Activated T-helper 1 cell treated with anti-CD3 and anti-CD28 coated beads, Interleukin-12 subunit alpha, Interleukin-12 subunit beta, Interleukin-2, Interleukin-4 antibody, amounts not matched to agents 30 ng/mL and 10 ng/mL and 1 ng/mL, durations not matched to agents 14 hours and 24 hours and 36 hours (primary cell): ENCODE measurements at regions of chr3 and their contacts with region 1.

Region 1: DNA sequence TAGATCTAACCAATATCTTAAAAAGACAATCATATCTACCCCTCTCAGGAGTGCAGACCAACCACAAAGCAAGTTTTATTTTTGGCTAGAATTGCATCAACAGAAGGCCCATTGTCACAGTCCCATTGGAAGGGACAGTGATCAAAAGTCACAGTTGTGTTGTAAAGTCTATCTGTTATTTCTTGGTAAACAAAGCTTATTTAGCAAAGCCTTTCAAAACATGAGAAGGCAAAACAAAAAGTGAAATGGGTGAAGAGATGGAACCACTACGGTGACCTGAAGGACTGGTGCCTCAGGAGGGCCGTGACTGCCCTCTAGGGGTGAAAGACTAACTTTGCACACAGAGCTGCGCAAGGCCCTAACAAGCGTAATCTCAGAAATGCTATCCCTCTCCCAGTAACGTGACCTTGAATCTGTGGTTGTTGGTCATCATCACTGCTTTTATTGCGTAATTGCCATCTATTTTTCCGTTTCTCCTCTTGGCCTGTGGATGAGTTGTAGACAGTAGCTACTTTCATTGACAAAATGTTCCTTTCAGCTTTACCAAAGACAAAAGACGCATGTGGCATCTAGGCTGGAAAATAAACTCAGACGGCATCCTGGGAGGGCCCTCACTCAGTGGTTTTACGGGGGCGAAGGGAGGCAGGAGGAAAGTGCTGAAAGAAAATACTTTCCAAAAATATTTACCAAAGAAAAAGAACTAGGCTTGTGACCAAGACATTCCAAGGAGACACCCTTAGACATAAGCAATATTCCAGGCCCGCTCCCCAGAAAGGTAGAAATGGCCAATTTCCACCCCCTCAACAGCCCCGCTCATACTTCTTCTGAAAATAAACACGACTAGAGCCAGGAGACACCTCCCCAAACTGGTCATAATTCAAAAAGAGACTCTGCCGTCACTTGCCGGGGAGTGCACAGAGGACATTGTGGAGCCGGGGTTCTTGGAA is 79.4 kb downstream of the FRMD4B start:
- DNase-seq: peak; percentile 60
- H3K4me3 Mint-ChIP-seq: peak overlapping the region; percentile 55
- H3K27ac Mint-ChIP-seq: peak overlapping the region; percentile 58
- H3K4me1 Mint-ChIP-seq: peaks cover 30% of the 10 kb centered on the region
- H3K27me3 Mint-ChIP-seq: no peaks in the 10 kb centered on the region

Region 2: GRCh38 chr3:69092030-69092516 is 214.4 kb before region 1 on chr3:
- intact Hi-C with region 1: loop called (anchors 2 kb)
- DNase-seq: no peak
- H3K4me3 Mint-ChIP-seq: peak overlapping the region; percentile 84
- H3K27ac Mint-ChIP-seq: peak overlapping the region; percentile 98
- H3K4me1 Mint-ChIP-seq: peaks cover 83% of the 10 kb centered on the region
- H3K27me3 Mint-ChIP-seq: no peaks in the 10 kb centered on the region

Region 3: DNA sequence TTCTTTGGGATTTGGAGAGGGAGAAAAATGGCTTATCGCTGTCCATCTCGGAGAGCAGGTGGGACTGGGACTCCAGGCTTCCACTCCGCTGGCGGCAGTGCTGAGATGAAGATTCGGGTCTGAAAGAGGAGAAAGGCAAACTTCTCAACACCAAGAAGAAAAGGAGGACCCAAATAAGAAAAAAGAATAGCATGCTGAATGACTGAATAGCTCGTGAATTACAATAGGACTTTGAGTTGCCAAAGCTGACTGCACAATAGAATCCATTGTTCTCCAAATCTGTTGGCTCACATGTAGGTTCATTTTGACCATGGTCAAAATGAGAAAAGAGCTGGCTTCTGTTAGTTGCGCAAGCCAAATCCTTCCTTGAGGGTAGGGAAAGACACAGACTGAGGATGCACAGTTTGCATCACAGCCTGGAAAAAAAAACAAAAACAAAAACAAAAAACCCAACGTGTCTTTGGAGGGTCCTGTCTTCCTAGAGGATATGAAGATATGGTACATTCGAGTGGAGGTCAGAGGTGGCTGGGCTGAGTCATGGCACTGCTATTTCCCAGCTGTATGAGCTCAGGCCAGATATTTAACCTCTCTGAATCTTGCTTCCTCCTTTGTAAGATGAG is 124.8 kb before region 1 on chr3:
- intact Hi-C with region 1: loop called (anchors 1 kb)
- DNase-seq: no peak
- H3K4me3 Mint-ChIP-seq: no peak overlapping the region
- H3K27ac Mint-ChIP-seq: peak overlapping the region; percentile 32
- H3K4me1 Mint-ChIP-seq: peaks cover 42% of the 10 kb centered on the region
- H3K27me3 Mint-ChIP-seq: no peaks in the 10 kb centered on the region

Region 4: GRCh38 chr3:69240651-69241568 is 65.6 kb before region 1 on chr3:
- intact Hi-C with region 1: loop called (anchors 1 kb)
- DNase-seq: no peak
- H3K4me3 Mint-ChIP-seq: no peak overlapping the region
- H3K27ac Mint-ChIP-seq: no peak overlapping the region
- H3K4me1 Mint-ChIP-seq: peaks cover 27% of the 10 kb centered on the region
- H3K27me3 Mint-ChIP-seq: no peaks in the 10 kb centered on the region

Region 5: GRCh38 chr3:69288161-69288895 is 18.2 kb before region 1 on chr3:
- intact Hi-C with region 1: loop called (anchors 1 kb)
- DNase-seq: no peak
- H3K4me3 Mint-ChIP-seq: peak overlapping the region; percentile 48
- H3K27ac Mint-ChIP-seq: peak overlapping the region; percentile 71
- H3K4me1 Mint-ChIP-seq: peaks cover 32% of the 10 kb centered on the region
- H3K27me3 Mint-ChIP-seq: no peaks in the 10 kb centered on the region

Region 6: DNA sequence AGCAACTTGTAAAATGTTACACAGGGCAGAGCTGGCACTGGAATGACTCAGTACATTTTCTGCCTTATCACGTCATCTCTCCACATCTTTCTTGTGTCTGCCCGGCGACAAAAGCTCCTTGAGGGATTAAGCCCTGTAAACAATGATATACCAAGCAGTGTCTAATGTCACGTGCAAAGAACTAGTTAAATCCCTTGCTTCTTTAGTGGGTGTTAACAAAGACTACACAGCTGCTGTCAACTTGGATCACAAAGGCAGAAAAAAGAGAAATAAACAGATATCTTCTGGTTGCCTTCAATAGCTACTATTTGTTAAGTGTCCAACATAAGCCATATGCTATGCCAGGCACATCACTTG is 127.4 kb after region 1 on chr3:
- intact Hi-C with region 1: loop called (anchors 1 kb)
- DNase-seq: no peak
- H3K4me3 Mint-ChIP-seq: no peak overlapping the region
- H3K27ac Mint-ChIP-seq: peak overlapping the region; percentile 54
- H3K4me1 Mint-ChIP-seq: peaks cover 51% of the 10 kb centered on the region
- H3K27me3 Mint-ChIP-seq: no peaks in the 10 kb centered on the region